GM10248 (cell line): ENCODE measurements at regions of chr6 and their contacts with region 1.

Region 1: GRCh38 chr6:56862415-56863175 is 92.3 kb upstream of the BEND6 start:
- DNase-seq: no peak
- CTCF ChIP-seq: no peak

Region 2: DNA sequence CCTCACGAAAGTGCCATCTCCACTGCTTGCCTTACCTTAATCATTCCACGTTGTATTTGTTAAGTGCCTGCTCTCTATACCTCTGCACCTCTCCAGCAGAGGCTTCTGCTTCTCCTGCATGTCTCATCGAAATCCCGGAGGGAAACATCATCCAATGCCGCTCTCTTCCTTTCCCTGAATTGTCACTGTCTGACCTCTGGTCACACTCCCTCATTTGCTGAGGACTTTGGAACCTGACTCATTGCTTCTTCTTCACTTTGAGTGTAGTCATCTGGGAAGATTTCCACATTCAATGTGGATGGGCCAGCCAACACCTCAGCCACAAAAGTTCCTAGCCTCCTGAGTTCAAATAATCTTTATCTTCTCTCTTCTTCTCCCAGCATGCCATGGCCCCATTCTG is 13.4 kb after region 1 on chr6:
- CTCF ChIA-PET with region 1: interaction called, 35 read pairs
- POLR2A ChIA-PET with region 1: interaction called, 3 read pairs
- DNase-seq: no peak
- CTCF ChIP-seq: no peak